ENCODE measurements at regions of chr12 and their contacts with region 1.

Region 1: DNA sequence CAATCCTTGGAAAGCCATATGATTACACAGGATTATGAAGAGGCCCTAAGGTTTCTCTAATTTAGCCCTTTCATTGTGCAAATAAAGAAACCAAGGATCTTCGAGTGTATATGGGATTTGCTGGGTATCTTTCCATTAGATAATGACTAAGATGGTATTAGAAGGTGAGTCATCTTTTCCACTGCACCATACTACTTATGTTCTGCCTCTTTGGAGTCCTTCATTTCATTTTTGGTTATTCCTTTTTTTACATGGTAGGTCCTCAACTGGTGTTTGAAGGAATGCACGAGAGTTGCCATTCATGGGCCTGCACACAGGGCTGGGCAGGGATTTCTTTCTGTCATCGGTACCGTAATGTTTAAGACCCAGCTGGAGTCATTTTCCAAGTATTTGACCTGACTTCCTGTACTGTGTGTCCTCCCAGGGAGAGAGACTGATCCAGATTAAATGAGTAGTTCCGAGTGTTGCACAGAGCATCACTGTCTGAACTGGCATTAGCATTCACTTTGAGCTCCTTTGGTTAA is 85.7 kb downstream of the BORCS5 start:
- DNase-seq: peak in 1 of 9 donors; percentile 32
- ATAC-seq: no peak
- H3K4me3 ChIP-seq: no peak overlapping the region
- H3K4me3 Mint-ChIP-seq: peak overlapping the region in 9 of 10 donors; percentile 9 to 78 (median 56)
- H3K27ac ChIP-seq: peak overlapping the region; percentile 61
- H3K27ac Mint-ChIP-seq: peak overlapping the region; percentile 92 to 99 (median 97)
- H3K4me1 ChIP-seq: peaks cover 52 to 54% of the 10 kb centered on the region in 2 donors
- H3K4me1 Mint-ChIP-seq: peaks cover 39 to 72% (median 66%) of the 10 kb centered on the region in 7 donors
- H3K27me3 ChIP-seq: no peaks in the 10 kb centered on the region
- H3K27me3 Mint-ChIP-seq: no peaks in the 10 kb centered on the region

Region 2: GRCh38 chr12:12070674-12071656 is 371.6 kb before region 1 on chr12 and contains the start of gene BCL2L14:
- CTCF ChIA-PET with region 1: no interaction called
- POLR2A ChIA-PET with region 1: no interaction called
- intact Hi-C with region 1: no loop called
- DNase-seq: peak in 6 of 9 donors; percentile 11 to 34 (median 24)
- ATAC-seq: peak; percentile 40
- H3K4me3 ChIP-seq: peak within 1 kb of the TSS; percentile 47
- H3K4me3 Mint-ChIP-seq: peak within 1 kb of the TSS; percentile 65 to 92 (median 79)
- H3K27ac ChIP-seq: peak within 1 kb of the TSS; percentile 58
- H3K27ac Mint-ChIP-seq: peak within 1 kb of the TSS; percentile 52 to 96 (median 90)
- H3K4me1 ChIP-seq: peaks cover 0 to 5% of the 10 kb centered on the region in 2 donors
- H3K4me1 Mint-ChIP-seq: peaks cover 13 to 37% (median 24%) of the 10 kb centered on the region in 7 donors
- H3K27me3 ChIP-seq: no peaks in the 10 kb centered on the region
- H3K27me3 Mint-ChIP-seq: peaks cover 0 to 8% (median 0%) of the 10 kb centered on the region in 5 donors
- total RNA-seq, gene BCL2L14: 0.92 to 7.6 (median 1.4) TPM

Region 3: DNA sequence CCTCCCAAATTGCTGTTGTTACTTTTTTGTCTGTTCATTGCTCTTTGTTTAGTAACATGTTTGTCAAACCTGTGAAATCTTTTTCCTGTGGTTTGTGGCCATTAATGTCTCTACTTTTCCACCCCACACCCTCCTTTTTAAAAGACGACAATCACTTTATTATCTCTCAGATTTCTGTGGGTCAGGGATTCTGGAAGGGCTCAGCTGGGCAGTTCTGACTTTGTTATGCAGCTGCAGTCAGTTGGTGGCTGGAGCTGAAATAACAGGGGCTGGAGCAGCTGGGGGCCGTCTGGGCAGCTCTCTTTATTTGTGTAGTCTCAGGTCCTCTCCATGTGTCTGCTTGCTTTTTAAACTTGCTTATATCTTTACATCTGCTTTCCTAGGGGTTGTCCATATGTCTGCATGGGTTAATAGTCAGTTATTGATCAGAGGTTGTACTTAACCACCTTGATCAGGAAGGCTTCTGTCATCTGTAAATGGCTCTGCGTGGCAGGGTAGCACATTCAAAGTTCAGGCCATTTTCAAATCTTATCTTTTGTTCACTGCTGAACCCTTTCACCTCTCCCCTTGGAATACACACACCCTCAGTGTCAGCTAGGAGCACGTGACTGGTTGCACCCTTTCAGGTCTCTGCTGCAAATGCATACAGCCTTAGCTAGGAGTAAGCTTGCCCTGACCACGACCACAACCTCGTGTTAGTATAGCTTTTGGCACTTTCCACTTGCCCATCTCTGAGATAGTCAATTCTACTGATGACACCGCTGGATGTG is 57.9 kb before region 1 on chr12:
- CTCF ChIA-PET with region 1: interaction called, 3 read pairs
- POLR2A ChIA-PET with region 1: no interaction called
- intact Hi-C with region 1: loop called (anchors 2 kb)
- DNase-seq: peak in 1 of 9 donors; percentile 34
- ATAC-seq: peak; percentile 56
- H3K4me3 ChIP-seq: no peak overlapping the region
- H3K4me3 Mint-ChIP-seq: peak overlapping the region in 5 of 10 donors; percentile 5 to 88 (median 30)
- H3K27ac ChIP-seq: no peak overlapping the region
- H3K27ac Mint-ChIP-seq: peak overlapping the region in 7 of 9 donors; percentile 46 to 98 (median 62)
- H3K4me1 ChIP-seq: peaks cover 15 to 57% of the 10 kb centered on the region in 2 donors
- H3K4me1 Mint-ChIP-seq: peaks cover 11 to 64% (median 43%) of the 10 kb centered on the region in 7 donors
- H3K27me3 ChIP-seq: no peaks in the 10 kb centered on the region
- H3K27me3 Mint-ChIP-seq: no peaks in the 10 kb centered on the region

Region 4: GRCh38 chr12:12456637-12457036 is 14.0 kb after region 1 on chr12:
- CTCF ChIA-PET with region 1: interaction called, 3 read pairs
- POLR2A ChIA-PET with region 1: interaction called, 24 read pairs
- intact Hi-C with region 1: loop called in 1 of 2 experiments (anchors 1 kb)
- DNase-seq: no peak
- ATAC-seq: peak; percentile 82
- H3K4me3 ChIP-seq: no peak overlapping the region
- H3K4me3 Mint-ChIP-seq: peak overlapping the region in 4 of 10 donors; percentile 7 to 57 (median 30)
- H3K27ac ChIP-seq: peak overlapping the region; percentile 24
- H3K27ac Mint-ChIP-seq: peak overlapping the region in 8 of 9 donors; percentile 10 to 92 (median 50)
- H3K4me1 ChIP-seq: no peaks in the 10 kb centered on the region
- H3K4me1 Mint-ChIP-seq: peaks cover 9 to 51% (median 19%) of the 10 kb centered on the region in 7 donors
- H3K27me3 ChIP-seq: no peaks in the 10 kb centered on the region
- H3K27me3 Mint-ChIP-seq: no peaks in the 10 kb centered on the region

Region 5: GRCh38 chr12:12474931-12475795 is 32.6 kb after region 1 on chr12:
- CTCF ChIA-PET with region 1: no interaction called
- POLR2A ChIA-PET with region 1: no interaction called
- intact Hi-C with region 1: loop called in 1 of 2 experiments (anchors 1 kb)
- DNase-seq: peak in 3 of 9 donors; percentile 22 to 49 (median 37)
- ATAC-seq: peak; percentile 84
- H3K4me3 ChIP-seq: peak overlapping the region; percentile 7
- H3K4me3 Mint-ChIP-seq: peak overlapping the region in 9 of 10 donors; percentile 11 to 76 (median 43)
- H3K27ac ChIP-seq: peak overlapping the region; percentile 39
- H3K27ac Mint-ChIP-seq: peak overlapping the region; percentile 72 to 95 (median 91)
- H3K4me1 ChIP-seq: peaks cover 7 to 17% of the 10 kb centered on the region in 2 donors
- H3K4me1 Mint-ChIP-seq: peaks cover 10 to 72% (median 42%) of the 10 kb centered on the region in 7 donors
- H3K27me3 ChIP-seq: no peaks in the 10 kb centered on the region
- H3K27me3 Mint-ChIP-seq: no peaks in the 10 kb centered on the region

Region 6: DNA sequence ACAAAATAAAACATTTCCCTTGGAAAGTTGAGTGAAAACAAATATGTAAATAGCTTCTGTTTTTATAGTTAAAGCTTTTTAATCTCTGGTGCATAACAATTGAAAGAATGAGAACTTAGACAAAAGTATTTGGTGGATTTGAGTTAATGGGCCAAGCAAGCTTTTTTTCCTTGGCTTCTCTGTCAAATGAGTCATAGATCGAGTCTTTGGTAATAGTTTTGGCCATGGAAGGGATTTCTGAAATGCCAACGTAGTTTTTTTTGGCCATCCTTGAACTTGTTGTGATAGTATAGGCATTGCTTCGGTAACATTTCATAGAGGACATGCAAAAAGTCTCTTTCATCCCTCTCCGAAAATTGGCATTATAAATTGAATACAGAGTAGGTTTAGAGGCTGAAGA is 218.5 kb after region 1 on chr12:
- CTCF ChIA-PET with region 1: no interaction called
- POLR2A ChIA-PET with region 1: interaction called, 3 read pairs
- intact Hi-C with region 1: loop called in 1 of 2 experiments (anchors 1 kb)
- DNase-seq: no peak
- ATAC-seq: no peak
- H3K4me3 ChIP-seq: no peak overlapping the region
- H3K4me3 Mint-ChIP-seq: no peak overlapping the region
- H3K27ac ChIP-seq: no peak overlapping the region
- H3K27ac Mint-ChIP-seq: peak overlapping the region in 1 of 9 donors; percentile 82
- H3K4me1 ChIP-seq: no peaks in the 10 kb centered on the region
- H3K4me1 Mint-ChIP-seq: peaks cover 0 to 3% (median under 1%) of the 10 kb centered on the region in 7 donors
- H3K27me3 ChIP-seq: no peaks in the 10 kb centered on the region
- H3K27me3 Mint-ChIP-seq: no peaks in the 10 kb centered on the region

Measured in naive thymus-derived CD4-positive, alpha-beta T cell (primary cell).